AG04449 (cell line): ENCODE measurements at regions of chr14 and their contacts with region 1.

Region 1: GRCh38 chr14:24431569-24432258 is 2.0 kb downstream of the KHNYN start:
- DNase-seq: peak; percentile 55
- H3K4me3 ChIP-seq: peak overlapping the region; percentile 88
- CTCF ChIP-seq: peak; percentile 95

Region 2: GRCh38 chr14:24339284-24340151 is 92.2 kb before region 1 on chr14 and contains the start of gene RIPK3:
- CTCF ChIA-PET with region 1: interaction called, 1,633 read pairs
- POLR2A ChIA-PET with region 1: interaction called, 23 read pairs
- DNase-seq: no peak
- H3K4me3 ChIP-seq: peak within 1 kb of the TSS; percentile 41
- CTCF ChIP-seq: no peak

Region 3: GRCh38 chr14:24366721-24367513 is 64.8 kb before region 1 on chr14:
- CTCF ChIA-PET with region 1: interaction called, 83 read pairs
- POLR2A ChIA-PET with region 1: interaction called, 32 read pairs
- DNase-seq: peak; percentile 81
- H3K4me3 ChIP-seq: peak overlapping the region; percentile 59
- CTCF ChIP-seq: no peak

Region 4: DNA sequence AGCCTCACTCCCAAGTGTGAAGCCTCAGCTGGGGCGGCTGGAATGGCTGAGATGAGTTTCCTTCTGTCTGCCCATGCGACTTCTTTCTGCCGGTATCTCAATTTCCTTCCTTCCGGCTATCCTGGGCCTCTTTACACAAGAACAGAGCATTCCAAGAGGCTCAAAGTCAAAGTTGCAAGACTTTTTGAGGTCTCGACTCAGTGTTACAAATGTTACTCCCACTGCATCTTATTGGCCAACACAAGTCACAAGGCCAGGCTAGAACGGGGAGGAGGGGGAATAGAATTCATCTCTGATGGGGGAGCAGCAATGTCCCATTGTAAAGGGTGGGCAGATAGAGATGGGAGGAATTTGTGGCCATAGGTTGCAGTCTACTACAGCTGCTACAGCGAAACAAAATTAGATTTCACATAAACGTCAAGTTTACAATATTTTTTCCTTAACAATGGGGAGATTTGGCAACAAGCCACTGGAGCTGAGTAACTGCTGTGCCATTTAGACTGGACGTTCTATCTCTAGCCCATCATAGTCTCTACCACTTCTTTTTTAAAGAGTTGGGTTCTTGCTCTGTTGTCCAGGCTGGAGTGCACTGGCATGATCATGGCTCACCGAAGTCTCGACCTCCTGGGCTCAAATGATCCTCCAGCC is 42.4 kb before region 1 on chr14:
- CTCF ChIA-PET with region 1: interaction called, 11 read pairs
- POLR2A ChIA-PET with region 1: no interaction called
- DNase-seq: no peak
- H3K4me3 ChIP-seq: no peak overlapping the region
- CTCF ChIP-seq: no peak

Region 5: DNA sequence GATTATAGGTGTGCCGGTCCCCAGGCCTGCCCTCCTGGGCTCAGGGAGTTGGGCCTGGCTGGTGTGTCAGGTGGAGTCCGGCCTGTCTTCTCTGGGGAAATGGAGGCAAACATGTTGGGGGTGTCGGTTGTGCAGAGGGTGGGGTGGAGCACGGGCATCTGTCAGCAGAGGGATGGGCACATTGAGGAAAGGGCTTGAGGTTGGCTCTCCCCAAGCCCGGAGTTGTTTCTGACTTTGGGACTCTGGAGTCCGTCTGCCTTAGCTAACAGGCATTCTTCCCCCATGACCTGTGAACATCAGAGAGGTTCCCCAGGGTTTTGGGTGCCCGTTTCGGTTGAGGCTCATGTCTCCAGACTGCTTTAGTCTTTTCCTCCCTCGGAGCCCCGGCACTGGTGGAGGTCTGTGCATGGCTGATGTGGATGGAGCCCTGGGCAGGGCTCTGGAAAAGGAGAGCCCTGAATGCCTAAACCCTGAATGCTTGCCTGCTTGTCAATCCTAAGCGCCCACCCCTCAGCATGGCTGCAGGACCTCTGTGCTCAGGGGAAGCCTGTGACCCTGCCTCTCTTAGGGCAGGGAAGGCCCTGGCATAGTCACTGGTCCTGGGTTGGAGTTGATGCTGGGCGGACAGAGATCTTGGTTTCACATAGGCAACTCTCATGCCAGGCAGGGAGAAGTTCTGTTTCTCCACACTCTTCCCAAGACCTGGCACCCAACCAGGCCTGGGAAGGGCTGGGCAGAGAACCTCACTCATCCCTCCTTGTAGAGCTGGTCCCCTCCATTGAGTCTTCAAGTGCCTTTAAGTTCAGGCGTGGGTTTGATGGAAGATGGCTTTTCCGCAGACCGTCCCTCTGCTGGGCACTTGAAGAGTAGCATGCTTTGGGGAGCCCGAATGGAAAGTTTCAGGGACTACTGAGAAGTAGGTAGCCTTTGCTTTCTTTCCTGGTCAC is 20.0 kb before region 1 on chr14:
- CTCF ChIA-PET with region 1: interaction called, 557 read pairs
- POLR2A ChIA-PET with region 1: interaction called, 5 read pairs
- DNase-seq: no peak
- H3K4me3 ChIP-seq: no peak overlapping the region
- CTCF ChIP-seq: peak; percentile 76